GM18951 (cell line): ENCODE measurements at regions of chr12 and their contacts with region 1.

Region 1: DNA sequence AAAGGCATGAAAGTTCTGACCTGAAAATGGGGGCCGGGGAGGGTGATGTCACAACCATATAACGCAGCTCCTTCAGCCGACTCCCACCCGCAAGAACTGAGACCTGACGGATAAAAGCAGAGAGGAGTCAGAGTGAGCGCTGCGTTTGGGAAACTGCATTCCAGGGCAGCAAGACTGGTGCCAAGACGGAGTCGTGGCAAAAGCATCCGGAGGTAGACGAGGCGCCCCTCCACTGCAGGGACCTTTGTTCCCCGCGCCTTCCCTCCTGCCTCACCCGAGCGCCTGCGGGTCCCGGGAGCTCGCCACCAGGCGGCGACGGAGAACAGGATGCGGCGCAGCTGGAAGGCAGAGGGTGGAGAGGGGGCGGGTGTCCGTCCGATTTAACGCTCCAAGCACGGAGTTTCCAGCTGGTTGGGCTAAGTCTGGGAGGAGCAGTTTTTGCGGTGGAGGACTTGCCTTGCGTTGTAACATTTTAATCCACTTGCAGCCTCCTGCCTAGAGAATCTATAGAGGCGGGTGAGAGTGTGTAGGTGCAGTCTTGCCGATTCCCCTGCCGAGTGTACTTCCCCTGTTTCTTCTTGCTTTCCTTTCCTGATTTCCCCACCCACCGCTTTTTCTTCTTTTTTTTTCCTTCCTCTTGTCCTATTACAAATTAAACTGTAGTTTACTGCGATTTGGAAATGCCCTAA is 1.2 kb upstream of the CPNE8 start:
- POLR2A ChIP-seq: peak; percentile 61

Region 2: GRCh38 chr12:38102197-38102596 is 804.4 kb before region 1 on chr12:
- in situ Hi-C with region 1: no loop called
- POLR2A ChIP-seq: no peak

Region 3: GRCh38 chr12:38332814-38333213 is 573.8 kb before region 1 on chr12:
- in situ Hi-C with region 1: loop called (anchors 25 kb)
- POLR2A ChIP-seq: no peak

Region 4: GRCh38 chr12:38664661-38665269 is 241.9 kb before region 1 on chr12:
- in situ Hi-C with region 1: loop called (anchors 10 kb)
- POLR2A ChIP-seq: no peak

Region 5: GRCh38 chr12:38771871-38772270 is 134.8 kb before region 1 on chr12:
- in situ Hi-C with region 1: loop called (anchors 10 kb)
- POLR2A ChIP-seq: no peak

Region 6: GRCh38 chr12:38838056-38838850 is 68.4 kb before region 1 on chr12:
- in situ Hi-C with region 1: no loop called
- POLR2A ChIP-seq: no peak

Region 7: GRCh38 chr12:38995249-38995648 is 88.6 kb after region 1 on chr12:
- in situ Hi-C with region 1: no loop called
- POLR2A ChIP-seq: no peak